ENCODE measurements at regions of chr19 and their contacts with region 1.

Region 1: DNA sequence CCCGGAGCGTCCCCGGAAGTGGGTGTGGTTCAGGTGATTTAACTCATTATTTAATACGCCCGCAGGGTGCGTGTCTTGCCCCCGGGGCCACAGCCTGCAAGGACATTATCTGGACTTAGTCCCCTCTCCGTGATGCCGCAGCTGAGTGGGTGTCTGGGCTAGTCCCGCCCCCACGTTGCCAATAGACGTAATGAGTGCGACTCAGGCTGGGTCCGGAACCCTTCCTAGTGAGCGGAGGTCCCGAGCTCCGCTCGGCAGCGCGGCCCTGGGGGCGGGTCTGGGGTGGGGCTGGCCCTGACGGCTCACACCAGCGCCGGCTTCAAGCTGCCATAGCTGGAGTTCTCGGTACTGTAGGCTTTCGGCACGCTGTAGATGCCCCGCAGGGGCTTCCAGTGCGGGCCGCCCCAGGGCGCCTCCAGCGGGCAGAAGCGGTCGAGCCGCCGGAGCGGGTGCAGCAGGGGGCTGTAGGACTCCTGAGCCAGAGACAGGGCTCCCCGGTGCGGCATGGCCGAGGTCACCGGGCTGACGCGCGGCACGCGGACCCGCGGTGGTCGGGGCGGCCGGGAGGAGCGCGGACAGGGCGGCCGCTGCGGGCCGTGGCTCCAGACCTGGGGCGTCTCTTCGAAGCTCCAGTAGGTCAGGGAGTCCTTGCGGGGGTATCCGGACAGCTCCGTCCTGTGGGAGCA is 918 bp upstream of the LHB start:
- DNase-seq: peak; percentile 76
- H3K4me3 Mint-ChIP-seq: peak overlapping the region; percentile 62
- H3K27ac Mint-ChIP-seq: no peak overlapping the region
- H3K4me1 Mint-ChIP-seq: peaks cover 30% of the 10 kb centered on the region
- H3K27me3 Mint-ChIP-seq: peaks cover 26% of the 10 kb centered on the region
- CTCF ChIP-seq: peak; percentile 60

Region 2: GRCh38 chr19:48588670-48589399 is 429.0 kb before region 1 on chr19:
- CTCF ChIA-PET with region 1: no interaction called
- intact Hi-C with region 1: no loop called
- DNase-seq: peak; percentile 97
- H3K4me3 Mint-ChIP-seq: peak overlapping the region; percentile 70
- H3K27ac Mint-ChIP-seq: peak overlapping the region; percentile 58
- H3K4me1 Mint-ChIP-seq: peaks cover 19% of the 10 kb centered on the region
- H3K27me3 Mint-ChIP-seq: peaks cover 65% of the 10 kb centered on the region
- CTCF ChIP-seq: peak; percentile 97

Region 3: GRCh38 chr19:49073514-49074378 is 55.9 kb after region 1 on chr19:
- CTCF ChIA-PET with region 1: interaction called, 13 read pairs
- intact Hi-C with region 1: no loop called
- DNase-seq: peak; percentile 74
- H3K4me3 Mint-ChIP-seq: peak overlapping the region; percentile 2
- H3K27ac Mint-ChIP-seq: no peak overlapping the region
- H3K4me1 Mint-ChIP-seq: peaks cover 29% of the 10 kb centered on the region
- H3K27me3 Mint-ChIP-seq: peaks cover 48% of the 10 kb centered on the region
- CTCF ChIP-seq: peak; percentile 58

Region 4: DNA sequence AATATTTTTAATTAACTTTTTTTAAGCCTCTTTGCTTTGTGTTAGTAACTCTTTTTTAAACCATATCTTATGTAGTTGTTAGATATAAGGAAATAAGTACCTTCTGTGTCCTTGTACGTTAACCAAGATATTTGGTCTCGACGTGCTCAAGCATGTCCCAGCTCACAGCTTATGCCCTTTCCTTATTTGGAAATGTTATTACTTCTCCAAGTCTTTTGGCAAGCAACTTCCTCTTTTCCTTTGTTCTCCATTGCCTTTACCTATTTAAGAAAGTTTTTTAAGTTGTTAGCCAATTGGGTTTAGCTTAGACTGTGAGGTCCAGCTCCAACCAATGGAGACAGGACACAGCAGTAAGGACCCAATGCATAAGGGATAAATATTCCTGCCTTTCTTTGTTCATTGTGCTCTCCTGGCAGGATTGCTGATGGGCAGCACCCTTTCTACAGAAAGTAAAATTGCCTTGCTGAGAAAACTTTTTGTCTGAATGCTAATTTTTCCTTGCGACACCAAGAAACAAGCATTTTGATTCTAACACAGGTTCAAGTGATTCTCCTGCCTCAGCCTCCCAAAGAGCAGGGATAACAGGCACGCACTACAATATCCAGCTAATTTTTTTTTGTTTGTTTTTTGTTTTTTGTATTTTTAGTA is 351.0 kb after region 1 on chr19:
- CTCF ChIA-PET with region 1: no interaction called
- intact Hi-C with region 1: no loop called
- DNase-seq: no peak
- H3K4me3 Mint-ChIP-seq: no peak overlapping the region
- H3K27ac Mint-ChIP-seq: no peak overlapping the region
- H3K4me1 Mint-ChIP-seq: no peaks in the 10 kb centered on the region
- H3K27me3 Mint-ChIP-seq: peaks cover 22% of the 10 kb centered on the region
- CTCF ChIP-seq: no peak

Measured in Calu3 (cell line).